HepG2 (cell line): ENCODE measurements at regions of chr10 and their contacts with region 1.

Region 1: DNA sequence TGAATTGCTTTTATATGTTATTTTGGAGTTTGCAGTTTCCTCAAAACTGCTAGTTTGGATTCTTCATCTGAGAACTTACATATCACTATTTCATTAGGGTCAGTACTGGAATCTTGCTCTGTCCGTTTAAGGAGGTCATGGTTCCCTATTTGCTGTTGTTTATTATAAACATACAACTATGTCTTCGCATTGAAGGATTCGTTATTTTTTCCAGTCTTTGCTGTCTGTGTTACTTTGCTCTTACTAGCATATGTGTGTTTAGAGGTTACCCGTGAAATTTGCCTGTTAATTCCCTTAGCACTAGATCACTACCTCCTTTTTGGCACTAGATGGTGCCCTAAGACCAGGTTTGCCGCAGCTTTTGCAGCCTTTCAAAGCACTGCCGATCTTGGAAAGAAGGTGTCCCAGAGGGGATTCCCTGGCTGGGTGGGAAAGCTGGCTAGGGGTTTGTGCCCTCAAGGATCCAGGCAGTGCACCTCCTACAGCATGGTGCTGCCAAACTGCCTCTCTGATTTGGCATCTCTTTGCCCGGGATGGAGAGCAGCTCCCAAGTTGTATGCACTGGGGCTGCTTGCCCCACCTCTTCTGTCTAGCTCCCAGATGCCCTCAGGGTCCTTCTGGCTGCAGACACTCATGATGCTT is 103.1 kb upstream of the APBB1IP start:
- DNase-seq: peak; percentile 50
- ATAC-seq: peak; percentile 88
- H3K4me3 ChIP-seq: no peak overlapping the region
- H3K27ac ChIP-seq: no peak overlapping the region
- H3K4me1 ChIP-seq: peaks cover 5% of the 10 kb centered on the region
- H3K27me3 ChIP-seq: peaks cover 0 to 4% of the 10 kb centered on the region in 2 experiments; a peak in 1 of 5 replicates
- CTCF ChIP-seq: peak; percentile 90
- EP300 ChIP-seq: no peak
- POLR2A ChIP-seq: no peak
- RAD21 ChIP-seq: peak; percentile 78

Region 2: DNA sequence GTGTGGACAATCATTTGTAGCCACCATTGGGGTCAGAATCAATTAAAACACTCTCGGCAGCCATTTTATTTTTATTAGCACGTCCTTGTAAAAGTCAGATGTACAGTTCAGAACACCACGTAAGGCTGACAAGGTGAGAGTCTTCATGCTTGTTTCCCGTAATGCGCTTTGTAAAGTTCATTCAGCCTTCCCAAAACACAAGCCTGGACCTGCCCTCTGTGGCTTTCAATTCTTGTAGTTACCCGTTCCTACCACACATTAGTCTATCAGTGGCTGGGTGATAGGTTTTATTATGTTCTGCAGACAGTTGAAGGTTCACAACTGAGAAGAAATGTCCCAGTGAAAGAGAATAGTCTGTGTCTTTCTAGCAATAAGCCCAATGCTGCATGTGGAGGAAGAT is 83.1 kb before region 1 on chr10:
- CTCF ChIA-PET with region 1: no interaction called
- POLR2A ChIA-PET with region 1: no interaction called
- in situ Hi-C with region 1: no loop called
- intact Hi-C with region 1: no loop called
- DNase-seq: no peak
- ATAC-seq: no peak
- H3K4me3 ChIP-seq: no peak overlapping the region
- H3K27ac ChIP-seq: no peak overlapping the region
- H3K4me1 ChIP-seq: no peaks in the 10 kb centered on the region
- H3K27me3 ChIP-seq: peaks cover 0 to 6% of the 10 kb centered on the region in 2 experiments; a peak in 2 of 5 replicates
- CTCF ChIP-seq: no peak
- EP300 ChIP-seq: no peak
- POLR2A ChIP-seq: no peak
- RAD21 ChIP-seq: no peak

Region 3: DNA sequence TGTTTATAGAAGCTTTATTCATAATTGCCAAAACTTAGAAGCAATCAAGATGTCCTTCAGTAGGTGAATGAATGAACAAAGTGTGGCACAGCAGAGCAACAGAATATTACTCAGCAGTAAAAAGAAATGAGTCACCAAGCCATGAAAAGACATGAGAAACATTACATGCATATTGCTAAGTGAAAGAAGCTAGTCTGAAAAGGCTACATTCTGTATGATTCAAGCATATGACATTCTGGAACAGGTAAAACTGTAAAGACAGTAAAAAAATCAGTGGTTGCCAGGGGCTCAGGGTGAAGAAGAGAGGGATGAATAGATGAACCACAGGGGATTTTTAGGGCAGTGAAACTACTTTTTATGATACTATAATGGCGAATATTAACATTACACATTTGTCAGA is 22.1 kb after region 1 on chr10:
- CTCF ChIA-PET with region 1: no interaction called
- POLR2A ChIA-PET with region 1: no interaction called
- in situ Hi-C with region 1: no loop called
- intact Hi-C with region 1: no loop called
- DNase-seq: no peak
- ATAC-seq: no peak
- H3K4me3 ChIP-seq: no peak overlapping the region
- H3K27ac ChIP-seq: no peak overlapping the region
- H3K4me1 ChIP-seq: no peaks in the 10 kb centered on the region
- H3K27me3 ChIP-seq: no peaks in the 10 kb centered on the region
- CTCF ChIP-seq: no peak
- EP300 ChIP-seq: no peak
- POLR2A ChIP-seq: no peak
- RAD21 ChIP-seq: no peak

Region 4: GRCh38 chr10:26556748-26557640 is 221.9 kb after region 1 on chr10:
- CTCF ChIA-PET with region 1: interaction called, 40 read pairs
- POLR2A ChIA-PET with region 1: no interaction called
- in situ Hi-C with region 1: loop called (anchors 5 kb)
- intact Hi-C with region 1: loop called (anchors 1 kb)
- DNase-seq: peak; percentile 34
- ATAC-seq: peak; percentile 64
- H3K4me3 ChIP-seq: no peak overlapping the region
- H3K27ac ChIP-seq: no peak overlapping the region
- H3K4me1 ChIP-seq: peaks cover 8% of the 10 kb centered on the region
- H3K27me3 ChIP-seq: no peaks in the 10 kb centered on the region; a peak in 1 of 5 replicates
- CTCF ChIP-seq: peak; percentile 85
- EP300 ChIP-seq: no peak
- POLR2A ChIP-seq: no peak
- RAD21 ChIP-seq: peak; percentile 74

Region 5: GRCh38 chr10:26725837-26726727 is 391.0 kb after region 1 on chr10:
- CTCF ChIA-PET with region 1: no interaction called
- POLR2A ChIA-PET with region 1: no interaction called
- in situ Hi-C with region 1: no loop called
- intact Hi-C with region 1: loop called (anchors 5 kb)
- DNase-seq: peak; percentile 27
- ATAC-seq: peak; percentile 77
- H3K4me3 ChIP-seq: no peak overlapping the region
- H3K27ac ChIP-seq: no peak overlapping the region
- H3K4me1 ChIP-seq: no peaks in the 10 kb centered on the region
- H3K27me3 ChIP-seq: no peaks in the 10 kb centered on the region
- CTCF ChIP-seq: peak; percentile 83
- EP300 ChIP-seq: no peak
- POLR2A ChIP-seq: no peak
- RAD21 ChIP-seq: peak; percentile 76

Region 6: DNA sequence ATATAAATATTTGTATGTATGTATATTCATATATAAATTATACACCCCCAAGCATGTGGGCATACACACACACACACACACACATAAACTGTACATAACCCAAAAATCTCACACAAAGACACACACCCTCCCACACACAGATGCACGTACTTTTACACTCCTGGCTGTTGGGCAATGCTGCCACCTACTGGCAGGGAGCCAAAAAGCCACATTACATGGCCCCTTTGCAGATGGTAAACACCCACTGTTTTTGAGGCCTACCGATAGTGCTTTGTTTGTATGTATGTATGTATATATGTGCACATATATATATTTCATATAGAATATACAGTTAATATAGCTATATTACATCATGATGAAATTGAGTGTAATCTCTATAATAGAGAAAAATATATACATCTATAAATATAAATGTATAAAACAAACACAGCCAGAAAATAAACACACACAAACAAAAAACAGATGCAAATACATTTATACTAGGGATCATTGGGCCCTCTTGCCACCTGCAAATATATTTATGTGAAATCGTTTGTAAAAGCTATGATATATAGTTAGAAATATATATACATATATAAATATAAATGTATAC is 1025.6 kb after region 1 on chr10:
- CTCF ChIA-PET with region 1: interaction called, 3 read pairs
- POLR2A ChIA-PET with region 1: no interaction called
- in situ Hi-C with region 1: loop called (anchors 25 kb)
- intact Hi-C with region 1: no loop called
- DNase-seq: peak; percentile 64
- ATAC-seq: peak; percentile 89
- H3K4me3 ChIP-seq: no peak overlapping the region
- H3K27ac ChIP-seq: no peak overlapping the region
- H3K4me1 ChIP-seq: no peaks in the 10 kb centered on the region
- H3K27me3 ChIP-seq: no peaks in the 10 kb centered on the region; a peak in 1 of 5 replicates
- CTCF ChIP-seq: peak; percentile 93
- EP300 ChIP-seq: no peak
- POLR2A ChIP-seq: no peak
- RAD21 ChIP-seq: peak; percentile 74